ENCODE measurements at regions of chr4 and their contacts with region 1.

Region 1: DNA sequence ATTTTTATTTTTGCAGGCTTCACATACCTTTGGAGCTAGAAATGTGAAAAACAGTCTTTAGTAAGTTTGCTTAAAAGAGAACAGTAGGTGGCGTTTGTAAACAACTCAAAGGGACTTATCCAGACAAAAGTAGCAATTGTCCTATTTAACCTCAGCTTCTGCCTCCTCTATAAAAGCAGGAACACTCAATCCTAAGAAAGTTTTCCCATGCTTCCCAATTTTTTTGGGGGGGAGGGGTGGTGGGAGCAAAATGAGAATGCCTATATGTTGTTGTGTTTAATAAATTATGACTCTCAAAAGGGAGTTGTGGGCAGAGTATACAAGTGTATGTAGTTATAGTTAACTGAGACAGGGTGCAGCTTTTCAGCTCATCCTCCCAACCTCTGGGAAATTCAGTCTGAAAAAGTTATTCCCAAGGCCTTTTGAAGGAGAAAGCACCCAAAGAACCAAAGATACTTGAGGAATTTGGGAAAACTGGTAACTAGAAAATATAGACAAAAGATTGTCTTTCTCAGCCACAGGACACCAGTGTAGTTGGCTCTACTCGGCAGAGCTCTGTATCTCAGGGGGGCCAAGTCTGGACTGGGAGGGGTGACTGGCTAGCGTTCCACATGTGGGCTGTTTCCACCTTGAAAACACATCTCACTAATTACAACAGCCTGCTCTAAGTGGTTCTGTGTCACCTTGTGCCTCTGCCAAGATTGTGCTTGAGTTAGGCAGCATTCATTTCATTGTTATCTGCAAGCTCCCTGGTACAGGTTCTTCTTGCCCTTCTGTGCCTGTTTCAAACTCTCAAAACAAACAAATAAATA is 2.8 kb downstream of the SFRP2 start:
- ATAC-seq: peak in 4 of 8 experiments; percentile 3 to 52 (median 36)
- H3K4me3 ChIP-seq: peak overlapping the region in 3 of 5 donors; percentile 8 to 49 (median 10)
- H3K27ac ChIP-seq: no peak overlapping the region
- H3K4me1 ChIP-seq: peaks cover 13 to 20% of the 10 kb centered on the region in 2 donors

Region 2: DNA sequence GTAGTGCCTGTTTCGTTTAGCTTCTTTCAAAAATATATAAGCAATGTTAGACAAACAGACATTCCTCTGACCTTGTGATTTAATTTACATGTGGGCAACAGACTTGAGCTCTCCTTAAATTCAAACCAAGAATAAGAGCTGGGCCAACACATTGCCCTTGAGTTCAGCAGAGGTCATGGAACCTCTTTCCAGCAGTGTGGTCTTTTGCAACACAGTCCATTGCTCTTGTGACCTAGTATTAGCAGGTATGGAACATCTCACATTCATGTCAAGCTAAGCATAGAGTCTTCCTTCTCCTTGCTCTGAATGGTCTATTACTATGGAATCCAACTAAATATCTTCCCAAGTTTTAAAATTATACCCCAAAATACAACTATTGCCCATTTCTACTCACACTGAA is 475.3 kb before region 1 on chr4:
- in situ Hi-C with region 1: no loop called
- ATAC-seq: no peak
- H3K4me3 ChIP-seq: no peak overlapping the region
- H3K27ac ChIP-seq: no peak overlapping the region
- H3K4me1 ChIP-seq: no peaks in the 10 kb centered on the region

Region 3: DNA sequence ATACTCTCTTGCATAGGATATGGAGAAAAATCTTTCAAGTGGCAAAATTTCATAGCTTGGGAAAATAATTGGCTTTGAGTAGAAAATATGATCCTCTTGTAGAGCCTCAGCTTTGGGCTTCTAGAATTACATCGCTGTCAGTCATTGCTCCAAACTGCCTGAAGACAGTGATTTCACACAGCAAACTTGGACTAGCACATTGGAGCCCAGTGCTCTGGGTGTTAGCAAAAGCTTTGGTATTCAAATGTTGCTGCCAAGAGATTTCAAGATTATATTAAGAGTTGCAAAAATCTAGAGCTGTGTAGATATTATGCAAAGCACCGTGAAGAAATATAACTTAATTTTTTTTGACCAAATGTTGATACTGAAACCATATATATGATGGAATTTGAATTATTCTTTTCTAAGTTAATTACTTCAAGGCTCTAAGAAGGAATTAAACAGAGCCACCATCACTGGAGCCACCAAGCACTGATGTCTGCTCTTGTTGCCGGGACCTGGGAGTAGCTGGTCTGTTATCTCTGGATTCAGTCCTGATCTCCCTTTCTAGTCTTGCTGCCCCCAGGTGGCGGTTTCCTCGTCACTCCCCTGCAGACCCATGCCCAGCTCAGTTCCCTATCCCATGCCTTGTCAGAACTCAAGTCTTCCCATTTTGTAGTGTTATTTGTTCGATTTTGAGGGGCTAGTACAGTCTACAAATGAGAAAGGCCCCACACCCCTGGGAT is 263.5 kb after region 1 on chr4:
- in situ Hi-C with region 1: loop called in 1 of 9 experiments (anchors 25 kb)
- ATAC-seq: peak in 3 of 8 experiments; percentile 61 to 87 (median 61)
- H3K4me3 ChIP-seq: no peak overlapping the region
- H3K27ac ChIP-seq: no peak overlapping the region
- H3K4me1 ChIP-seq: no peaks in the 10 kb centered on the region

Region 4: GRCh38 chr4:154314248-154314647 is 528.1 kb after region 1 on chr4:
- in situ Hi-C with region 1: loop called in 1 of 9 experiments (anchors 10 kb)
- ATAC-seq: peak in 4 of 8 experiments; percentile 32 to 92 (median 82)
- H3K4me3 ChIP-seq: no peak overlapping the region
- H3K27ac ChIP-seq: no peak overlapping the region
- H3K4me1 ChIP-seq: no peaks in the 10 kb centered on the region